ENCODE measurements at regions of chr22 and their contacts with region 1.

Region 1: DNA sequence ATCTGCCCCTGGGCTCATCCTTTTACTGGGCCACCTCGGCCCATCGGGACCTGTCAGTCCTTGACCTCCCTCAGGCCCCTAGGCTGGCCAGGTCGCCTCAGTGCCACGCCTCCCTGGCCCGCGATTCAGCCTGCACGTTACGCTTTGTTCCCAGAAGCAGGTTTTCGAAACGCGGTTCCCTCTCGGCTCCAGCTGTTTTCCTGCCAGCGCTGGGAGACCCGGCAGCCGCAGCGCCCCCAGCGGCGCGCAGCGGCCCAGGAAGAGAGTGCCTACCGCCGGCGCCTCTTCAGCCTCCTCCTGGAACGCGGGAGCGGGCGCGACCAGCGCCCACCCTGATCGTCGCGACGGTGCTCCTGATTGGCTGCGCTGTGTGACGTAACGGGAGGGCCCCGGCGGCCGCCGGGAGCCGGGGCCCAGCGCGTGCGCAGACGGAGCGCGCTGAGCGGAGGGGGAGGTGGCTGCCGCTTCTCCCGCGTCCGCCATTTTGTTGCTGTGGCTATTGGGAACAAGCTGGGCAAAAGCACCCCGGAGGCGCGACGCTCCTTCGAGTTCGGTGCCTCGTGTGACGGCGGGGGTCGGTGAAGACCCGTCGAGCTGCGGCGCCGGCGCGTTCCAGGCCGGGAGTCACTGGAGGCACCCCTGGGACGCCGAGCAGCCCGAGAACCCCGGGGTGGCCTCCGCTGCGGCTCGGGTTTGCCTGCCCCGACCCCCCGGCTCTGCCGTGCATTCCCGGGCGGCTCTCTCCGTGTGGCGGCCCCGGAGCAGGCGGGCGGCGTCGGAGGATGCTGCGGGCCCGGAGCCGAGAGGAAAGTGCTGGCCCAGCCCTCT is at the start of gene CRKL:
- DNase-seq: peak; percentile 97 to 99 (median 98)
- ATAC-seq: peak; percentile 99 to 100 (median 100)
- H3K4me3 ChIP-seq: peak within 1 kb of the TSS; percentile 62 to 99 (median 89)
- H3K27ac ChIP-seq: peak within 1 kb of the TSS; percentile 78 to 98 (median 94)
- H3K4me1 ChIP-seq: peaks cover 0 to 41% (median 24%) of the 10 kb centered on the region in 12 donors
- H3K27me3 ChIP-seq: no peaks in the 10 kb centered on the region
- CTCF ChIP-seq: peak; percentile 84 to 100 (median 95)
- POLR2A ChIP-seq: peak; percentile 66 to 92
- total RNA-seq, gene CRKL: 45.6 to 64.2 (median 53.2) TPM

Region 2: GRCh38 chr22:20803696-20804324 is 113.4 kb before region 1 on chr22:
- intact Hi-C with region 1: no loop called
- DNase-seq: peak in 2 of 5 donors; percentile 32 to 33
- ATAC-seq: peak; percentile 45 to 63 (median 52)
- H3K4me3 ChIP-seq: no peak overlapping the region
- H3K27ac ChIP-seq: no peak overlapping the region
- H3K4me1 ChIP-seq: no peaks in the 10 kb centered on the region
- H3K27me3 ChIP-seq: no peaks in the 10 kb centered on the region
- CTCF ChIP-seq: peak in 11 of 12 donors; percentile 15 to 51 (median 38)
- POLR2A ChIP-seq: no peak

Region 3: DNA sequence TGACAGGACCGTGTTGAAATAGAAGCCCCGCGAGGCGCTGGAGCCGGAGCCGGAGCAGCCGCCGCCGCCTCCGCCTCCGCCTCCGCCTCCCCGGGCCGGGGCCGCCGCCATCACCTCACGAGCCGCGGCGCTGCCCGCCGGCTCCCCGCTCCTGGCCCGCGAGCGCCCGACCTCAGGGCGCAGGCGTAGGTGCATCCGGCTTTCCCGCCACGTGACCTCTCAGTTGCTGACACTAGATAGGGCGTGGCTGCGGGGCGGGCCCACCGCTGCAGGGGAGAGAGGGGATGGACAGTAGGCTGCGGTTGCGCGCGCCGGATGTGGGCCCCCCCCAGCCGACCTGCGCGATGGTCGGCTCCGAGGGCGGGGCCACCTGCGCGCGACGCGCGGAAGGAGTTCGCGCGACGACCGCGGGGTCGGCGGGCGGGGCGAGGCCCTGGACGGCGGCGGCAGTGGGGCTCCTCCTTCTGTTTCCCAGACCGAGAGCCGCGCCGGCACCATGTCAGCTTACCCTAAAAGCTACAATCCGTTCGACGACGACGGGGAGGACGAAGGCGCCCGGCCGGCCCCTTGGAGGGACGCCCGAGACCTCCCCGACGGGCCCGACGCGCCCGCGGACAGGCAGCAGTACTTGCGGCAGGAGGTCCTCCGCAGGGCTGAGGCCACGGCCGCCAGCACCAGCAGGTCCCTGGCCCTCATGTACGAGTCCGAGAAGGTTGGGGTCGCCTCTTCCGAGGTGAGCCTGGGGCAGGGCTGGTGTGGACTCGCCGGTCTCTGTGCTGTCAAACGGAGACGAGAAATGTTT is 58.4 kb before region 1 on chr22 and contains the starts of genes PI4KA and SNAP29:
- intact Hi-C with region 1: loop called in 7 of 10 experiments (anchors 2 to 10 kb)
- DNase-seq: peak; percentile 99 to 100 (median 99)
- ATAC-seq: peak; percentile 98 to 99 (median 98)
- H3K4me3 ChIP-seq: peak within 1 kb of the TSS; percentile 78 to 98 (median 89)
- H3K27ac ChIP-seq: peak within 1 kb of the TSS; percentile 59 to 95 (median 90)
- H3K4me1 ChIP-seq: peaks cover 0 to 64% (median 32%) of the 10 kb centered on the region in 12 donors
- H3K27me3 ChIP-seq: no peaks in the 10 kb centered on the region
- CTCF ChIP-seq: peak in 2 of 12 donors; percentile 14 to 24
- POLR2A ChIP-seq: peak in 1 of 2 donors; percentile 88
- total RNA-seq, gene PI4KA: 34.6 to 66.4 (median 48.3) TPM
- total RNA-seq, gene SNAP29: 20.4 to 38.7 (median 26.2) TPM

Region 4: GRCh38 chr22:20885557-20886323 is 31.5 kb before region 1 on chr22:
- intact Hi-C with region 1: loop called in 1 of 10 experiments (anchors 5 kb)
- DNase-seq: peak; percentile 74 to 86 (median 81)
- ATAC-seq: peak; percentile 91 to 98 (median 97)
- H3K4me3 ChIP-seq: no peak overlapping the region
- H3K27ac ChIP-seq: peak overlapping the region; percentile 24 to 76 (median 72)
- H3K4me1 ChIP-seq: peaks cover 0 to 25% (median 11%) of the 10 kb centered on the region in 12 donors
- H3K27me3 ChIP-seq: no peaks in the 10 kb centered on the region
- CTCF ChIP-seq: peak; percentile 63 to 89 (median 77)
- POLR2A ChIP-seq: no peak

Region 5: GRCh38 chr22:20981787-20982562 is 64.8 kb after region 1 on chr22 and contains the start of gene LZTR1:
- intact Hi-C with region 1: loop called in 2 of 10 experiments (anchors 1 to 10 kb)
- DNase-seq: peak; percentile 86 to 91 (median 88)
- ATAC-seq: peak; percentile 87 to 96 (median 95)
- H3K4me3 ChIP-seq: peak within 1 kb of the TSS; percentile 65 to 99 (median 88)
- H3K27ac ChIP-seq: peak within 1 kb of the TSS; percentile 22 to 96 (median 94)
- H3K4me1 ChIP-seq: peaks cover 7 to 39% (median 25%) of the 10 kb centered on the region in 12 donors
- H3K27me3 ChIP-seq: peaks cover 0 to 3% (median 0%) of the 10 kb centered on the region in 9 donors
- CTCF ChIP-seq: peak; percentile 38 to 83 (median 60)
- POLR2A ChIP-seq: peak in 1 of 2 donors; percentile 90
- total RNA-seq, gene LZTR1: 18.4 to 41.9 (median 26.6) TPM

Region 6: GRCh38 chr22:21001560-21002325 is 84.5 kb after region 1 on chr22 and contains the start of gene THAP7:
- intact Hi-C with region 1: loop called in 2 of 10 experiments (anchors 5 to 10 kb)
- DNase-seq: peak; percentile 97 to 99 (median 98)
- ATAC-seq: peak; percentile 95 to 97 (median 96)
- H3K4me3 ChIP-seq: peak within 1 kb of the TSS; percentile 61 to 94 (median 78)
- H3K27ac ChIP-seq: peak within 1 kb of the TSS; percentile 91 to 99 (median 98)
- H3K4me1 ChIP-seq: peaks cover 3 to 36% (median 30%) of the 10 kb centered on the region in 12 donors
- H3K27me3 ChIP-seq: no peaks in the 10 kb centered on the region
- CTCF ChIP-seq: no peak
- POLR2A ChIP-seq: peak in 1 of 2 donors; percentile 76
- total RNA-seq, gene THAP7: 15.3 to 39.0 (median 17.5) TPM

Measured in heart left ventricle (tissue), 16 donors.